ENCODE measurements at regions of chr13 and their contacts with region 1.

Region 1: DNA sequence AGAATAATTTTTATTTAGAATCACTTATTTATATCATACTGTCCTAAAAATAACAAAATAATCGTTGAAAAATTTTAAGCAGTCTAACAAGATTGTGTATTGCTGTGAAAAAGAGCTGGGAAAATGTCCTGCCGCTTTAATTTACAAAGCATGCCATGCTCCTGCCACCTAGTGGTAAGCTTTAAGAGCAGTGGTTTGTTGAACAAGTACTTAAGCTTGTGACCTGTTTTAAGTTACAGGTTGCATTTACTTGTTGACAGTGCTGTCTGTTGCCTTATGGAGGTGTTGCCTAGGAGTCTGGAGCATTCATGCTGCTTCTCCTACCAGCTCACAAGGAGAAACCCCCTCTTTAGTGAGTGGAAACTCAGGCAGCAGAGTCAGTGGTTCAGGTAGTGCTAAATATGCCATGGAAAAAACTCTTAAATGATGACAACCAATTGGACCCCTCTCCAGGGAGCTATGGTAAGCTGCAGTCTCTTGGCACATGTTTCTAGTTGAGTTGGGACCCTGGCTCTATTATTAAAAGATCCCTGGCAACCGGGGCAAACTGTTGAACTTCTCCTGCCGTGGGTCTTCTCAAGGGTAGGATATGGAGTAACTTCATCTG is 68.4 kb downstream of the SPATA13 start:
- DNase-seq: peak in 3 of 5 donors; percentile 36 to 71 (median 47)
- H3K4me3 ChIP-seq: no peak overlapping the region
- H3K4me3 Mint-ChIP-seq: peak overlapping the region in 1 of 7 donors; percentile 19
- H3K27ac ChIP-seq: no peak overlapping the region
- H3K27ac Mint-ChIP-seq: peak overlapping the region in 3 of 8 donors; percentile 53 to 72 (median 57)
- H3K4me1 ChIP-seq: peaks cover 28% of the 10 kb centered on the region
- H3K4me1 Mint-ChIP-seq: peaks cover 62 to 88% (median 76%) of the 10 kb centered on the region in 3 donors
- H3K27me3 ChIP-seq: no peaks in the 10 kb centered on the region
- H3K27me3 Mint-ChIP-seq: no peaks in the 10 kb centered on the region

Region 2: GRCh38 chr13:24005755-24006281 is 223.1 kb before region 1 on chr13:
- CTCF ChIA-PET with region 1: no interaction called
- POLR2A ChIA-PET with region 1: no interaction called
- DNase-seq: no peak
- H3K4me3 ChIP-seq: no peak overlapping the region
- H3K4me3 Mint-ChIP-seq: no peak overlapping the region
- H3K27ac ChIP-seq: no peak overlapping the region
- H3K27ac Mint-ChIP-seq: peak overlapping the region in 1 of 8 donors; percentile 13
- H3K4me1 ChIP-seq: no peaks in the 10 kb centered on the region
- H3K4me1 Mint-ChIP-seq: no peaks in the 10 kb centered on the region
- H3K27me3 ChIP-seq: no peaks in the 10 kb centered on the region
- H3K27me3 Mint-ChIP-seq: peaks cover 2 to 8% of the 10 kb centered on the region in 2 donors

Region 3: GRCh38 chr13:24254146-24254841 is 25.3 kb after region 1 on chr13:
- CTCF ChIA-PET with region 1: interaction called, 16 read pairs
- POLR2A ChIA-PET with region 1: interaction called, 6 read pairs
- DNase-seq: peak; percentile 56 to 87 (median 73)
- H3K4me3 ChIP-seq: peak overlapping the region; percentile 89
- H3K4me3 Mint-ChIP-seq: peak overlapping the region; percentile 91 to 99 (median 99)
- H3K27ac ChIP-seq: peak overlapping the region; percentile 85
- H3K27ac Mint-ChIP-seq: peak overlapping the region; percentile 95 to 100 (median 98)
- H3K4me1 ChIP-seq: peaks cover 71% of the 10 kb centered on the region
- H3K4me1 Mint-ChIP-seq: peaks cover 84 to 95% (median 92%) of the 10 kb centered on the region in 3 donors
- H3K27me3 ChIP-seq: no peaks in the 10 kb centered on the region
- H3K27me3 Mint-ChIP-seq: no peaks in the 10 kb centered on the region

Region 4: DNA sequence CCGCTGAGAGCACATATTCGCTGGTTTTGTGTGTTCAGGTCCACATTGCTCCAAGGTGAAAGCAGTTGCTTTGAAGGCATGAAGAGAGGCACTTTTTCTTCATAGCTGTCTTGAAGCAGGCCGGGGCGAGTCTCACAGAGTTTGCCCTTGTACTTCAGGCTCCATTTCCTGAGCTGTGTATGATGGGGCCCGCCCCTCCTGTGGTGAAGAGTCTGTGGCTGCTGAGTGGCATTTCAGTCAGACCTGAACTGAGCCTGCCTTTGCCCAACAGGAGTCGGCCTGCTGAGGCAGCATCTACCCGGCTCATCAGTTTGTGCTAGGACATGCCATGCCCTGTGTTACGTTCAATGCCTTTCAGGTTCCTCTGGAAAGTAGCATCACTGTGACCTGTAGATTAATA is 36.0 kb after region 1 on chr13:
- CTCF ChIA-PET with region 1: interaction called, 34 read pairs
- POLR2A ChIA-PET with region 1: interaction called, 7 read pairs
- DNase-seq: peak; percentile 69 to 91 (median 83)
- H3K4me3 ChIP-seq: peak overlapping the region; percentile 42
- H3K4me3 Mint-ChIP-seq: peak overlapping the region; percentile 77 to 89 (median 84)
- H3K27ac ChIP-seq: no peak overlapping the region
- H3K27ac Mint-ChIP-seq: peak overlapping the region; percentile 92 to 100 (median 98)
- H3K4me1 ChIP-seq: peaks cover 99% of the 10 kb centered on the region
- H3K4me1 Mint-ChIP-seq: peaks cover 93 to 96% (median 95%) of the 10 kb centered on the region in 3 donors
- H3K27me3 ChIP-seq: no peaks in the 10 kb centered on the region
- H3K27me3 Mint-ChIP-seq: no peaks in the 10 kb centered on the region

Region 5: DNA sequence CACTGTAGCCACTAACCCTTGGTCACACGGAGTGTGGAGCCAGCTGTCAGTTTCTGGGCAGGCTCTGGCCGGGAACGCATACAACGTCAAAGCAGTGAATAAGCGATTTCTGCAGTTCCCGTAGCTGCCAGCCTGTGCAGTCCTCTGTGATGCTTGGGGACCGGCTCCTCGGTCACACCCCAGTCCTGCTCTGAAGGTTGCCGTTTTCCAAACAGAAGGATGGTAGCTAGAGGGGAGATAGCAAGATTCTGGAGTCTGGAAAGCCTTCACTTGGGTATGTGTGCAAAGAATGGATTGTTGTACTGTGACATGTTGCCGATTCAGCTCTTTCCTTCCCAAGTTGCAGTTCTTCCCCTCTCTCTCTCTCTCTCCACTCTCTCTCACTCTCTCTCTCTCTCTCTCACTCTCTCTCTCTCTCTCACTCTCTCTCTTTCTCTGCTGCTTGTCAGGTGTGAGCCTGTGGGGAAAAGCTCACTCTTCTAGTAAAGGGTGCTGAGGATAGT is 41.7 kb after region 1 on chr13:
- CTCF ChIA-PET with region 1: interaction called, 34 read pairs
- POLR2A ChIA-PET with region 1: interaction called, 7 read pairs
- DNase-seq: peak; percentile 47 to 79 (median 76)
- H3K4me3 ChIP-seq: peak overlapping the region; percentile 48
- H3K4me3 Mint-ChIP-seq: peak overlapping the region; percentile 83 to 93 (median 89)
- H3K27ac ChIP-seq: peak overlapping the region; percentile 81
- H3K27ac Mint-ChIP-seq: peak overlapping the region; percentile 91 to 99 (median 98)
- H3K4me1 ChIP-seq: peaks cover 92% of the 10 kb centered on the region
- H3K4me1 Mint-ChIP-seq: peaks cover 91 to 96% (median 93%) of the 10 kb centered on the region in 3 donors
- H3K27me3 ChIP-seq: no peaks in the 10 kb centered on the region
- H3K27me3 Mint-ChIP-seq: peaks cover 0 to 6% of the 10 kb centered on the region in 2 donors

Region 6: GRCh38 chr13:25678398-25678797 is 1449.4 kb after region 1 on chr13:
- CTCF ChIA-PET with region 1: no interaction called
- POLR2A ChIA-PET with region 1: no interaction called
- DNase-seq: peak in 1 of 5 donors; percentile 2
- H3K4me3 ChIP-seq: no peak overlapping the region
- H3K4me3 Mint-ChIP-seq: no peak overlapping the region
- H3K27ac ChIP-seq: no peak overlapping the region
- H3K27ac Mint-ChIP-seq: no peak overlapping the region
- H3K4me1 ChIP-seq: no peaks in the 10 kb centered on the region
- H3K4me1 Mint-ChIP-seq: no peaks in the 10 kb centered on the region
- H3K27me3 ChIP-seq: no peaks in the 10 kb centered on the region
- H3K27me3 Mint-ChIP-seq: peaks cover 0 to 6% of the 10 kb centered on the region in 2 donors

Measured in CD8-positive, alpha-beta memory T cell (primary cell).